ENCODE measurements at regions of chr20 and their contacts with region 1.

Region 1: GRCh38 chr20:32207626-32208498 is at the starts of genes PLAGL2 and POFUT1:
- DNase-seq: peak; percentile 86 to 94
- ATAC-seq: peak; percentile 97 to 99 (median 98)
- H3K4me3 ChIP-seq: peak within 1 kb of the TSS; percentile 78
- H3K4me3 Mint-ChIP-seq: peak within 1 kb of the TSS; percentile 97
- H3K27ac ChIP-seq: peak within 1 kb of the TSS; percentile 61
- H3K27ac Mint-ChIP-seq: peak within 1 kb of the TSS; percentile 82 to 86
- H3K4me1 ChIP-seq: peaks cover 28% of the 10 kb centered on the region
- H3K4me1 Mint-ChIP-seq: peaks cover 78 to 81% of the 10 kb centered on the region in 2 donors
- H3K27me3 ChIP-seq: no peaks in the 10 kb centered on the region
- H3K27me3 Mint-ChIP-seq: no peaks in the 10 kb centered on the region
- CTCF ChIP-seq: no peak
- total RNA-seq, gene PLAGL2: 13.5 to 16.6 (median 15.1) TPM
- total RNA-seq, gene POFUT1: 9.7 to 14.5 (median 13.2) TPM

Region 2: DNA sequence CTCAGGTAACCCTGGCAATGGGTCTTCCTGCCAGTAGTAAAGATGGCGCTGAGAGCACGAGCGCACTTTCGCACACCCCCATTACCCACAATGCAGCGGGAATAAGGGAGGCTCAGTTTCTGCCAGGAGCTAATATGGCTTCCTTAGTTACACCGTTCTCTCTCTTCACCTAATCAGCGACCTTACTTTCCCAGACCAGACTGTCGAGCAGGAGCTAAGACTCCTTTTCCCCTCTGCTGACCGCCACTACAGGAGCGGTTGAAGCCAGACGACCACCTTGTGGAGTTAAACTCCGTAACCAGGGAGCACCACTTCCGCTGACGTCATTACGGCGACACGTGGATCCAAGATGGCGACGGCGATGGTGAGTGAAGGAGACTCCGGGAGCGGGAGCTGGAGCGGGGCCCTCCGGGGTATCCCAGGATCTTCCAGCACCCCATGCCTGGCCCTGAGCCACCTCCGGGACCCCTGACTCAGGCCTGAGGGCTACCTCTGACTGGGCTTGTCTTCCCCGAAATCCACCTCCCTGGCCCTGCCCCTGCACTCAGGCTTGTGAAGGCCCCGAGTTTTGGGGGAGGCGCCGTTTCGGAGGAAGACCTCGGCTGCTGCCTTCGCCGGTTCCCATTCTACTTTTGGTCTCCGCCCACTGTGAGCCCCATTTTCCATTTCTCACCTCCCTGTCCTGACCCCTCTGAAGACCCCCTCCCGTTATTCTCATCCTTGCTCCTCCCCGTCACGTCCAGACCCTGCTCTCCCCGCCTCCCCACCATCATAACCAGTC is 98.3 kb before region 1 on chr20 and contains the start of gene TM9SF4:
- intact Hi-C with region 1: loop called (anchors 1 kb)
- DNase-seq: peak; percentile 89 to 97
- ATAC-seq: peak; percentile 90 to 94 (median 92)
- H3K4me3 ChIP-seq: peak within 1 kb of the TSS; percentile 85
- H3K4me3 Mint-ChIP-seq: peak within 1 kb of the TSS; percentile 92
- H3K27ac ChIP-seq: peak within 1 kb of the TSS; percentile 89
- H3K27ac Mint-ChIP-seq: peak within 1 kb of the TSS; percentile 98 to 99
- H3K4me1 ChIP-seq: peaks cover 18% of the 10 kb centered on the region
- H3K4me1 Mint-ChIP-seq: peaks cover 24 to 38% of the 10 kb centered on the region in 2 donors
- H3K27me3 ChIP-seq: no peaks in the 10 kb centered on the region
- H3K27me3 Mint-ChIP-seq: no peaks in the 10 kb centered on the region
- CTCF ChIP-seq: no peak
- total RNA-seq, gene TM9SF4: 35.8 to 42.8 (median 41.2) TPM

Region 3: DNA sequence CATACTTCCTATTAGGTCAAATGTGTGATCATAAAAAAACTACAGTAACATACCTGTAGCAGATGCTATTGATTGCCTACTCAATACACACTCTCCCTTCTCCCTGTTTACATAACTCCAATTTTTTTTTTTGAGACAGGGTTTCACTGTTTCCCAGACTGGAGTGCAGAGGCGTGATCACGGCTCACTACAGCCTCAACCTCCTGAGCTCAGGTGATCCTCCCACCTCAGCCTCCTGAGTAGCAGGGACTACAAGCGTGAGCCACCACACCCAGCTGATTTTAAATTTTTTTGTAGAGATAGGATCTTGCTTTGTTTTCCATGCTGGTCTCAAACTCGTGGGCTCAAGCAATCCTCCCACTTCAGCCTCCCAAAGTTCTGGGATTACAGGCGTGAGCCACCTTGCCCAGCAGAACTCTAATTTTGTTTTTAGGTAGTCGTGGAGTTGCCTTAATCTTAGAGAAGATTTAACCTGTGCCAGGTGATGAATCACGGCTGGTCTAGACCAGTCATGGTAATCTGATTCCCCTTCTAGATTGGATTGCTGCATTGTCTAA is 55.6 kb after region 1 on chr20:
- intact Hi-C with region 1: no loop called
- DNase-seq: no peak
- ATAC-seq: no peak
- H3K4me3 ChIP-seq: no peak overlapping the region
- H3K4me3 Mint-ChIP-seq: no peak overlapping the region
- H3K27ac ChIP-seq: no peak overlapping the region
- H3K27ac Mint-ChIP-seq: no peak overlapping the region
- H3K4me1 ChIP-seq: no peaks in the 10 kb centered on the region
- H3K4me1 Mint-ChIP-seq: no peaks in the 10 kb centered on the region
- H3K27me3 ChIP-seq: no peaks in the 10 kb centered on the region
- H3K27me3 Mint-ChIP-seq: peaks cover 0 to 3% of the 10 kb centered on the region in 2 donors
- CTCF ChIP-seq: no peak

Region 4: GRCh38 chr20:32285621-32286371 is 77.9 kb after region 1 on chr20:
- intact Hi-C with region 1: loop called (anchors 2 kb)
- DNase-seq: peak; percentile 20 to 71
- ATAC-seq: peak; percentile 89 to 94 (median 91)
- H3K4me3 ChIP-seq: peak overlapping the region; percentile 4
- H3K4me3 Mint-ChIP-seq: peak overlapping the region; percentile 68
- H3K27ac ChIP-seq: peak overlapping the region; percentile 66
- H3K27ac Mint-ChIP-seq: peak overlapping the region; percentile 77 to 89
- H3K4me1 ChIP-seq: peaks cover 17% of the 10 kb centered on the region
- H3K4me1 Mint-ChIP-seq: peaks cover 30 to 35% of the 10 kb centered on the region in 2 donors
- H3K27me3 ChIP-seq: no peaks in the 10 kb centered on the region
- H3K27me3 Mint-ChIP-seq: no peaks in the 10 kb centered on the region
- CTCF ChIP-seq: no peak

Region 5: GRCh38 chr20:32333988-32334885 is 126.4 kb after region 1 on chr20:
- intact Hi-C with region 1: no loop called
- DNase-seq: peak in 1 of 2 donors; percentile 57
- ATAC-seq: peak in 1 of 3 donors; percentile 67
- H3K4me3 ChIP-seq: no peak overlapping the region
- H3K4me3 Mint-ChIP-seq: no peak overlapping the region
- H3K27ac ChIP-seq: peak overlapping the region; percentile 56
- H3K27ac Mint-ChIP-seq: peak overlapping the region; percentile 16 to 25
- H3K4me1 ChIP-seq: peaks cover 9% of the 10 kb centered on the region
- H3K4me1 Mint-ChIP-seq: peaks cover 0 to 6% of the 10 kb centered on the region in 2 donors
- H3K27me3 ChIP-seq: no peaks in the 10 kb centered on the region
- H3K27me3 Mint-ChIP-seq: no peaks in the 10 kb centered on the region
- CTCF ChIP-seq: no peak

Region 6: GRCh38 chr20:32357869-32358631 is 150.2 kb after region 1 on chr20 and contains the start of gene ASXL1:
- intact Hi-C with region 1: loop called (anchors 1 kb)
- DNase-seq: peak; percentile 84 to 96
- ATAC-seq: peak; percentile 91 to 98 (median 95)
- H3K4me3 ChIP-seq: peak within 1 kb of the TSS; percentile 99
- H3K4me3 Mint-ChIP-seq: peak within 1 kb of the TSS; percentile 97
- H3K27ac ChIP-seq: peak within 1 kb of the TSS; percentile 99
- H3K27ac Mint-ChIP-seq: peak within 1 kb of the TSS; percentile 94 to 95
- H3K4me1 ChIP-seq: peaks cover 21% of the 10 kb centered on the region
- H3K4me1 Mint-ChIP-seq: peaks cover 29 to 46% of the 10 kb centered on the region in 2 donors
- H3K27me3 ChIP-seq: no peaks in the 10 kb centered on the region
- H3K27me3 Mint-ChIP-seq: no peaks in the 10 kb centered on the region
- CTCF ChIP-seq: no peak
- total RNA-seq, gene ASXL1: 106 to 125 (median 108) TPM

Measured in natural killer cell (primary cell).